ENCODE measurements at regions of chr21 and their contacts with region 1.

Region 1: GRCh38 chr21:35204850-35205541 is 155.9 kb upstream of the RUNX1 start:
- DNase-seq: peak; percentile 93
- H3K4me3 ChIP-seq: peak overlapping the region; percentile 14
- H3K27ac ChIP-seq: peak overlapping the region; percentile 91
- H3K27me3 ChIP-seq: no peaks in the 10 kb centered on the region
- CTCF ChIP-seq: peak; percentile 41

Region 2: GRCh38 chr21:34845521-34846451 is 359.2 kb before region 1 on chr21:
- CTCF ChIA-PET with region 1: no interaction called
- POLR2A ChIA-PET with region 1: interaction called, 10 read pairs
- DNase-seq: peak; percentile 51
- H3K4me3 ChIP-seq: no peak overlapping the region
- H3K27ac ChIP-seq: peak overlapping the region; percentile 65
- H3K27me3 ChIP-seq: no peaks in the 10 kb centered on the region
- CTCF ChIP-seq: no peak

Region 3: GRCh38 chr21:34888569-34889319 is 316.3 kb before region 1 on chr21:
- CTCF ChIA-PET with region 1: interaction called, 4 read pairs
- POLR2A ChIA-PET with region 1: interaction called, 11 read pairs
- DNase-seq: peak; percentile 92
- H3K4me3 ChIP-seq: peak overlapping the region; percentile 92
- H3K27ac ChIP-seq: peak overlapping the region; percentile 99
- H3K27me3 ChIP-seq: no peaks in the 10 kb centered on the region
- CTCF ChIP-seq: no peak

Region 4: DNA sequence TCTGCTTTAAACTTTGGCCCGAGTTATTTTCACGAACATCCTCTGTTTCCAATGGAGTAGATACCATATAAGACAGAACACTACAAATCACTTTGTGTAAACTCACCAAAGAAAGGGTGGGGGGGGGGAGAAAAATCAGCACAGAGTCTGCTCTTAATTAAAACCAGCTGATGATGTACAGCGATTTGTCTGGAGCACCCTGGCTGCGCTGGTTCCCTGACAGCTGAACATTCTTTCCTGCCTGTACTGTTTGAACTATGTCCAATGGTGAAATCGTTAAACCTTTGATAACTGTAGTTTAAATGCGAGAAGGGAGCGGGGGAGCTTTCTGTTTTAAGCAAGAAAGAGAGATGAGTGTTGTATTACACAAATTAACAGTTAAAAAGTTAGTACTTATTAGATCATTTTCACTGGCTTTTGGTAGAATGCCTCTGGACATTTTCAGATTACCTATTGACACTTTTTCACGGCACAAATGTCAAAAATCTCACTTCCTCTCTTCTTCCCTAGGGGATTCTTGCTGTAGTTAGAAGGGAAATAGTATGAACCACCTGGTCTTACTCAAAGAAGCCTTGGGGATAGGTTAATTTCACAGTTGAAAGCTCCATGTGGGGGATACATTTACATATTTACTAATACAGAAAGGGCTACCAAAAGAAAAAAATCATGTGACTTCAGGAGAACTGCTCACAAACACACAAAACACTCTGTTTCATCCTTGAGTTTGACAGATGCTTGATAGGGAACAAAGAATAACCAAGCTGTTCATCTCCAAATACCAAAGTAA is 15.7 kb before region 1 on chr21:
- CTCF ChIA-PET with region 1: interaction called, 3 read pairs
- POLR2A ChIA-PET with region 1: interaction called, 10 read pairs
- DNase-seq: peak; percentile 87
- H3K4me3 ChIP-seq: peak overlapping the region; percentile 11; the same call in 1 of the 2 replicates
- H3K27ac ChIP-seq: no peak overlapping the region
- H3K27me3 ChIP-seq: no peaks in the 10 kb centered on the region
- CTCF ChIP-seq: no peak

Region 5: DNA sequence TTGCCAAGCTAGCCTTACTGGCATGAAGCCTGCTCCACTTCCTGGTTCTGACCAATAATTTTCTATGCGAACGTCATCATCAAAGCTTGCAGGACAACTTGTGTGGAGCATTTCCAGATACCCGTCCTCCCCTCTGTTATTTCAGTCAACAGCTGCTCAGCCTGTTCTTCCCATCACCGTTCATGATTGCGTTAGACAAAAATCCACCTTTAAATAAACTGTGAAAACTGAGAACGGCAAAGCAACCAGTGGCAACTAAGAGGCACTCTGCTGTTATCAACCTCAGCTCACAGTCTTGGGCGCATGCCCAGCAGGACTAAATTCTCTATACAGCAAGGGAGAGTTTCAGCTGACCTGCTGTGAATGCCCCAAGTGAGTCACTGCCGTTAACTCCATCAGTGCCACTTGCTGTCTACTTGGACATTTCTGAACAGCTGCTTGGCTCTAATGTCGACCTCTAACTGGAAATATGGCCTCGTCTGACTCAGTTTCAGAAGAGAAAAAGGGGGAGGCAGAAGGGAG is 51.5 kb after region 1 on chr21:
- CTCF ChIA-PET with region 1: no interaction called
- POLR2A ChIA-PET with region 1: interaction called, 11 read pairs
- DNase-seq: peak; percentile 98
- H3K4me3 ChIP-seq: 0 out of 2 replicates have a peak overlapping the region, but pooled peaks have one; percentile 5
- H3K27ac ChIP-seq: peak overlapping the region; percentile 71
- H3K27me3 ChIP-seq: no peaks in the 10 kb centered on the region
- CTCF ChIP-seq: 0 out of 2 replicates have a peak, but pooled peaks have one; percentile 8

Region 6: GRCh38 chr21:35303085-35303484 is 98.1 kb after region 1 on chr21:
- CTCF ChIA-PET with region 1: no interaction called
- POLR2A ChIA-PET with region 1: no interaction called
- DNase-seq: peak; percentile 66
- H3K4me3 ChIP-seq: no peak overlapping the region
- H3K27ac ChIP-seq: no peak overlapping the region
- H3K27me3 ChIP-seq: no peaks in the 10 kb centered on the region
- CTCF ChIP-seq: no peak

Measured in AG04450 (cell line).